Activated CD4-positive, alpha-beta T cell treated with anti-CD3 and anti-CD28 coated beads, Interleukin-2, amount 10 ng/mL, durations not matched to agents 24 days and 14 days (primary cell): ENCODE measurements at regions of chr10 and their contacts with region 1.

Region 1: GRCh38 chr10:79562135-79562756 is 2.0 kb upstream of the SFTPA2 start:
- DNase-seq: peak; percentile 90
- H3K4me3 Mint-ChIP-seq: no peak overlapping the region
- H3K27ac Mint-ChIP-seq: no peak overlapping the region
- H3K4me1 Mint-ChIP-seq: peaks cover 5% of the 10 kb centered on the region
- H3K27me3 Mint-ChIP-seq: peaks cover 22% of the 10 kb centered on the region

Region 2: DNA sequence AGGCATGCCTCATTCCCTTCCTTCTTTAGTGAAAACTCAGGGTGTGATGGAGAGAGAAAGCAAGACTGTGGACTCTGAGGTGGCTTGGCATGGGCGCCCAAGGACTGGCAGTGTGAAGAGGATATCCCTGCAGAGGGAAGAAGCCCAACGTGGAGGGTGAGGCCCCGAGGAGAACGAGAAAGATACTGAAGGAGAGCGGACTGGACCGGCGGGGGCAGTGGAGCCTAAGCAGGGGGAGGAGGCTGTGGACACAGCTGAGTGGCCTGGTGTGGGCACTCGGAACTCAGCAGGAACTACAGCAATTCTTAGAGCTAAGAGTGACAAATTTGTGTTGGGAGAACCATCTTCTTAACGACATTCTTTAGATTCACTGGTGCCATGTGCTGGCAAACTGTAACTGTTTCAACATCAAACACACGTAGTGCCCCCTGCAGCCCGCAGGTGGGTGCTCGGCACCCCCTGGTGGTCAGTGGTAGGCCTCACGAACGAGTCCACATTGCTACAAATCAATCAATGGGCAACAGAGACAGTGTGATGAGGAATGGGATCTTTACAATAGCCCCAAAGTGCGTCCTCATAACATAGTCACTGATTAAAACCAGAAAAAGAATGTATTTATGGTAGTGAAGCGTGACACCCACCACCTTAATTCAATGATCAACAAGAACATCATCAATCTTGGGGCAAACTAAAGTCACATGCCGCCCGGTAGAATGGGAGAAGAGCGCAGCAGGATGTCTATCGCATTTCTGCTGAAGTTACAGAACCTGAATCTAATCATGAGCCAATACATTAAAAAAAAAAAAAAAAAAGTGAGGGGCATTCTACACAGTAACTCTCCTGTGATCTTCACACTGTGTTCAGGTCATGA is 46.5 kb after region 1 on chr10:
- intact Hi-C with region 1: loop called (anchors 1 kb)
- DNase-seq: peak; percentile 84
- H3K4me3 Mint-ChIP-seq: no peak overlapping the region
- H3K27ac Mint-ChIP-seq: no peak overlapping the region
- H3K4me1 Mint-ChIP-seq: no peaks in the 10 kb centered on the region
- H3K27me3 Mint-ChIP-seq: peaks cover 4% of the 10 kb centered on the region

Region 3: GRCh38 chr10:79929409-79929904 is 367.2 kb after region 1 on chr10:
- intact Hi-C with region 1: loop called (anchors 1 kb)
- DNase-seq: peak; percentile 93
- H3K4me3 Mint-ChIP-seq: no peak overlapping the region
- H3K27ac Mint-ChIP-seq: no peak overlapping the region
- H3K4me1 Mint-ChIP-seq: peaks cover 4% of the 10 kb centered on the region
- H3K27me3 Mint-ChIP-seq: peaks cover 26% of the 10 kb centered on the region